ENCODE measurements at regions of chr6 and their contacts with region 1.

Region 1: DNA sequence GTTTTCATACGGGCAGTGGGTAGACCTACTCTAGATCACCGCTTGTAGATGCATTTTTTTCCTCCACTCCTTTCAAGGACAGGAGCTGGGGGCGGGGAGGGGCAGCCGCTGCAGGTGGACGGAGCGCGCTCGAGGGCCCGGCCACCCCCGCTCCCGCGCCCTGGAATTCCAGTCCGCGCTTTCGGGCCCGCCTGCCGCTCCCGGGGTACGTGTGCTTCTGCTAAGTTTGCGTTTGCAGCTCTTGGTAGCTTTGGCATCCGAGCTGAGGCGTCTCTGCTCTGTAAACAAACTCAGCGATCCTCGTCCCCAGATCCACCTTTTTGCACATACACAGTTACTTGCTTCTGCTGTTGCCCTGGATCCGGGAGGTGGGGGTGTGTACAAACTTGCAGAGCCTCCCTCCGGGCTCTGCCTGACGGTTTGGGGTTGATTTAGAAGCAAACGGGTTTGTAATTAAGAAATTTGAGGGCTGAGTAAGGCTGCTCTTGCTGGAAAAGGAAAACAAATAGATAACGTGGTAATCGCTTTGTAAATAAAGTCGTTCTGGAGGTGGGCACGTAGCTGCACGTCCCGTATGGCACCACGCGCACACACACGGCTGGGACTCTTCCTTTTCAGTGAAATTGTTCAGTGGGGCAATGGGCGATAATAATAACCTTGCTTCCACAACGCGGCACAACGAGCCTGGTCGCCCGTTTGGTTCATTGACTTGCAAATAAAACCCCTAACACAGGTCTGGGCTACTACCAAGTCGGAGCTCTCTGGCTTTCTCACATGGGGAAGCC is 976 bp upstream of the CITED2 start:
- DNase-seq: peak; percentile 91
- H3K4me3 ChIP-seq: peak overlapping the region; percentile 91
- H3K27ac ChIP-seq: peak overlapping the region; percentile 96
- H3K4me1 ChIP-seq: peaks cover 52% of the 10 kb centered on the region
- H3K27me3 ChIP-seq: no peaks in the 10 kb centered on the region
- CTCF ChIP-seq: no peak

Region 2: GRCh38 chr6:139655790-139656687 is 280.6 kb after region 1 on chr6:
- intact Hi-C with region 1: no loop called
- DNase-seq: no peak
- H3K4me3 ChIP-seq: no peak overlapping the region
- H3K27ac ChIP-seq: no peak overlapping the region
- H3K4me1 ChIP-seq: no peaks in the 10 kb centered on the region
- H3K27me3 ChIP-seq: no peaks in the 10 kb centered on the region
- CTCF ChIP-seq: no peak

Region 3: DNA sequence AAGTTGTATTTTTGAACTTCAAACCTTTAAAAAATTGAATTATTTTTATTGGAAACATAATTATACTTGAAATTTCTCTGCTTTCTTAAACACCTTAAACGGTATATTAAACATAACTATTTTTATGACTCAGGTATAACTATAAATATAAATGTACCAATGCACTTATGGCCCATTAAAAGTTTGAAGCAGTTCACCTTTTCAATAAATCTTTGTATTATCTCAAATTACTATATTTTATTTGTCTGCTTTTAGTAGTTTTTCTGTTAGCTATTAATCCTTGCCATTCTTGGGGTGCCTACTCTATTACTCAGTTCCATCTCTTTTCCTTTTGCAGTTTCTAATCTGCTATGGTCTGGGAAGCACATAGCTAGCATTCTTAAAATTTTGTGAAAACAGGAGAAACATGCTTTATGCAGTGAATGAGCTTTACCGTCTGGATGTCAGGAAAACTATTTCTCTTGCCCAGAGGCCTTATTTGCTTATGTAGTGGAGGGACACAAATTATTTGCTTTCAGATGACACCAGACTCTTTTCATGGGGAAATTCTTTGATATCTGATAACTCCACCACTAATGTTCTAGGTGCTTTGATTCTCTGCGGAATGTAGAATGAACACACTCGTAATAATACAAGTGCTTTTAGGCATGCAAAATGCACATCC is 377.9 kb after region 1 on chr6:
- intact Hi-C with region 1: loop called (anchors 10 kb)
- DNase-seq: no peak
- H3K4me3 ChIP-seq: no peak overlapping the region
- H3K27ac ChIP-seq: no peak overlapping the region
- H3K4me1 ChIP-seq: peaks cover 39% of the 10 kb centered on the region
- H3K27me3 ChIP-seq: no peaks in the 10 kb centered on the region
- CTCF ChIP-seq: no peak

Region 4: DNA sequence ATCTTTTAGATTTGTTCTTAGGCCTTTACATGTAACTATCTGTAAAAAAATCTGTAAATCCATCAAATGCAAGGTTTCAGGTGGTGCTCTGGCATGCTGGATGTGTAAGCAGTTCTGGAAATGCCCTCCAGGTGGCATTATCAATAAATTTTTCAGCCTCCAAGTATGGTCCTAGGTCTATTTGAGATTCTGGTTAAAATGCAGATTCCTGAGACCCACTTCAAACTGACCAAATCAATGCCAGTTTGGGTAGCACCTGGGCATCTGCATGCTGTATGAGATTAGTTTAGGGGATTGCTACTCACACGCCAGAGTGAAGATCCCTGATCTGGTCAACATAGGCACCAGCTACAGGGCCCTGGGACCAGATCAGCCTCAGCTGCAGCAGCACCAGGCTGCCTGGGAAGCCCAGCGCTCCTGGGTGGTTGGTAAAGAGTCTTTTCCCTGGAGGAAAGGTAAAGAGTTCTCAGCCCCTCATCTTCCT is 506.3 kb after region 1 on chr6:
- intact Hi-C with region 1: loop called (anchors 10 kb)
- DNase-seq: no peak
- H3K4me3 ChIP-seq: peak overlapping the region; percentile 17
- H3K27ac ChIP-seq: peak overlapping the region; percentile 80
- H3K4me1 ChIP-seq: peaks cover 25% of the 10 kb centered on the region
- H3K27me3 ChIP-seq: no peaks in the 10 kb centered on the region
- CTCF ChIP-seq: peak; percentile 72

Region 5: GRCh38 chr6:140441256-140441655 is 1065.8 kb after region 1 on chr6:
- intact Hi-C with region 1: loop called (anchors 10 kb)
- DNase-seq: peak; percentile 46
- H3K4me3 ChIP-seq: no peak overlapping the region
- H3K27ac ChIP-seq: peak overlapping the region; percentile 45
- H3K4me1 ChIP-seq: peaks cover 38% of the 10 kb centered on the region
- H3K27me3 ChIP-seq: no peaks in the 10 kb centered on the region
- CTCF ChIP-seq: peak; percentile 72

Measured in left ventricle myocardium inferior (tissue), 1 donor.